ENCODE measurements at regions of chr9 and their contacts with region 1.

Region 1: DNA sequence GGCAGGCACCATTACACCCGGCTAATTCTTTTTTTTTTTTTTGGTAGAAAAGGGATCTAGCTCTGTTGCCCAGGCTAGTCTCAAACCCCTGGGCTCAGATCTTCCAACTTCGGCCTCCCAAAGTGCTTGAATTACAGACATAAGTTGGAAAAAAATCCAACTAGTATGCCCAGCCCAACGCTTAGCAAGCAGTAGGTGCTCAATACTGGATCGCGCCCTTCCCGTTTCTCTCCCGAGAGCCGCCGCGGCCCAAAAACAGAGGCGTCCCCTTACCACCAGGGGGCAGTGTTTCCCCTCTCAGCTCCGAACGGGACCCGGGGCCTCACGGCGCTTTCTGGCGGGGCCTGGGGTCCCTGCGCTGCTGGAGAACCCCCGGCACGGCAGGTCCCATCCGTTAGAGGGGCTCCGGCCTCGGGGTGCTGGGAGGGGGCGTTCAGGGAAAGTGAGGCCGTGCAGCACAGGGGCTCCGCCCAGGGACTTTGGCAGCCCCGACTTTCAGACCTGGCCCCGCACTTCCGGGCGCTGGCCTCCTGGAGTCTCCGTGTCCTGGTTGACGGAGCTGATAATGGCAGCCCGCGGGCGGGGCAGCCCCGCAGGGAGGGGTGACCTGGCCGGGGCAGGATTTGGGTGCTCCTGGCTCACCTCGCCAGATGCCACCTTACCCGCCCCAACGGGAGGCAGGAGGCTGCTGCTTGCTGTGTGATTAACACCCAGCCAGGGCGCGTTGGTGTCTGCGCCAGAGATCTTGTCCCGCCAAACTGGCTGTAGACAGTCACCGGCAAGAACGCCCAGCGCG is 15.2 kb downstream of the PTGES start:
- DNase-seq: peak; percentile 96
- H3K4me3 Mint-ChIP-seq: peak overlapping the region; percentile 71
- H3K27ac Mint-ChIP-seq: peak overlapping the region; percentile 81
- H3K4me1 Mint-ChIP-seq: peaks cover 9% of the 10 kb centered on the region
- H3K27me3 Mint-ChIP-seq: peaks cover 3% of the 10 kb centered on the region

Region 2: DNA sequence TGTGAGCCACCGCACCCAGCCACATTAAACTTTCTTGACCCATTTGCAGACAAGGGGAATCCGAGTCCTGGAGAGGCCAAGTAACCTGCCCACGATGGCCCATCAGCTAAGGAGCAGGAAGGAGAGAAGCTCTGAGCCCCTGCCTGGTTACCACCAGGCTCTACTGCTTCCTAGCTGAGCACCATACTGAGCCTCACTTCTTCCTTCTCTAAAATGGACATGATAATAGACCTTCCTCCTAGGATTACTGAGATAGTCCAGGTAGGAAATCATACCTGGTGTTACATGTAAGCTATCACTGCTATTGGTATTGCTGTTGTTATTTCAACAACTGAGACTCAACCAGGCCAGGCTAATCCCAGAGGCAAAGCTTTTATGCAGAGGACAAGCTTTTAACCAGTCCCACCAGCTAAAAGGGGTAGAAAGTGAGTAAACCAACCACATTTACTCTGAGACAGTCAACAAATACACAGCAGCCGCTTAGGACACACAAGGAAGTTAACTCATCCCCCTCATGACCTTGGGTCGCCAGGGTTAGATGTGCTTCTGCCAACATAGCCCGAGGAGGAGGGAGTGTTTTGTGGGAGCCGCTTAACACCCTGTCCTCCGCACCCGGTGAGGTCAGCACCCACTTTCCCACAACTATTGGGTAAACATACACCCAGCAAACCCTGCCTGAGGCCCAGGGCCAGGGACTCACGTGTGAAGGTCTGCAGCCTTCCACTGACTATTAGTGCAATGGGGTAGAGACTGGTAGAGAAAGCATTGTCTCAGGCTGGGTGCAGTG is 35.8 kb after region 1 on chr9:
- intact Hi-C with region 1: no loop called
- DNase-seq: no peak
- H3K4me3 Mint-ChIP-seq: no peak overlapping the region
- H3K27ac Mint-ChIP-seq: no peak overlapping the region
- H3K4me1 Mint-ChIP-seq: peaks cover 12% of the 10 kb centered on the region
- H3K27me3 Mint-ChIP-seq: peaks cover 12% of the 10 kb centered on the region

Region 3: DNA sequence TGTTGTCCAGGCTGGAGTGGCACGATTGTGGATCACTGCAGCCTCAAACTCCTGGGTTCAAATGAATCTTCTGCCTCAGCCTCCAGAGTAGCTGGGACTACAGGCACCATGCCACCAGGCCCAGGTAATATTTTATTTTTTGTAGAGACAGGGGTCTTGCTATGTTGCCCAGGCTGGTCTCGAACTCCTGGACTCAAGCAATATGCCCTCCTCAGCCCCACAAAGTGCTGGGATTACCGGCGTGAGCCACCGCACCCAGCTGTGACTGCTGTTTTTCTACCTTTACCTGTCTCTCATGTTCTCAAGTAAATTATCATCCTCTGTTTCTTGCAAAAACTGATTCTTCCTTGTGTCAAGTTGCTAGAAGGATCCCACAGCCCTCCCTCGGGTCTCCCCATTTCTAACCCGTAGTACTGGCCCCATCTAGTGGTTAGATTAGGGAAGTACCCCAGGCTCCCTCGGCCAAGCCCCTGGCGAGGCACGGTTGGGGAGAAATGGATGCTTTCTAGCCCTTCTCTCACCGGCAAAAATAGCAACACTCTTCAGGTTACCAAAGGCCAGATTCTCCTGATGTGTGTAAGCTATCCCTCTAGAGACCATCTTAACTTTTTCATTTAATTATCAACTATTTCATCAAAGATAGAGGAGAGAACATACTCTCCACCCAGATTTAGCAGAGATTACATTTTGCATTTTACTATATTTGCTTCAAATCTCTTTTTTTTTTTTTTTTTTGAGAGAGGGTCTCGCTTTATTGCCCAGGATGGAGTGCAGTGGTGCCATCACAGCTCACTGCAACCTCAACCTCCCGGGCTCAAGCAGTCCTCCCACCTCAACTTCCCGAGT is 46.1 kb after region 1 on chr9:
- intact Hi-C with region 1: loop called (anchors 1 kb)
- DNase-seq: peak; percentile 94
- H3K4me3 Mint-ChIP-seq: no peak overlapping the region
- H3K27ac Mint-ChIP-seq: no peak overlapping the region
- H3K4me1 Mint-ChIP-seq: peaks cover 4% of the 10 kb centered on the region
- H3K27me3 Mint-ChIP-seq: peaks cover 24% of the 10 kb centered on the region

Region 4: GRCh38 chr9:129796029-129796910 is 58.6 kb after region 1 on chr9:
- intact Hi-C with region 1: loop called (anchors 2 kb)
- DNase-seq: no peak
- H3K4me3 Mint-ChIP-seq: no peak overlapping the region
- H3K27ac Mint-ChIP-seq: no peak overlapping the region
- H3K4me1 Mint-ChIP-seq: no peaks in the 10 kb centered on the region
- H3K27me3 Mint-ChIP-seq: peaks cover 7% of the 10 kb centered on the region

Region 5: DNA sequence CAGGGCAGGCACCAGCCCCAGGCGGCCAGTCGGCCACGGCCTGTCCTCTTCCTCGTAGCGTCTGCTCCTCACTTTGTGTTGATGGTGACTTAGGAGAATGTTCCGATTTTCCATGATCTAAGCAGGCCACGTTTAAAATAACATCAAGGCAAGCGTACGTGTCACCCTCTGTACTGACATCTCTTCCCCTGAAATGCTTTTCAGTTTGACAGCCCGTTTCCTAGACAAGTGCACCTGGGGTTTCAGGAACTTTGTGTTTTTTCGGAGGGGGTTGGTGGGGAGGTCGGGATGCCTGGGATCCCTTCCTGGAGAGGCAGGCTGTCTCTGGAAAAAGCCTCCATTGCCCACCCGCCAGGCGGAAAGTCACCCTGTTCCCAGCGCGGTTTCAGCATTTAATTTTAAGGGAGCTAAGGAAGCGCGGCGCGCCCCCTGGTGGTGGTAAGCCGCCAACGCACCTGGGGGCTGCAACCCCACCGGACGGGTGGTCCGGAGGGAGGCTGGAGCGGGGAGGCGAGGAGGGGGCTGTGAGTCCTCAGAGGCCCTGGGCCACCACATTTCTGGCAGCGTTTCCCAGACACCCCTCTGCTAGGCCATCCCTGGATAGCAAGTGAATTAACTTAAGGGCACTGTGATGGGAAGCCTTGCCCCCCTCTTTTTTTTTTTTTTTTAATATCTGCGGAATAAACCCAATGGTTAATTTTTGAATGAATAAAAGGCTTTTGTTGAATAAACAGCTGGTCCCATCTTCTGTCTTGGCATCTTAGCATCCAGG is 498.4 kb after region 1 on chr9:
- intact Hi-C with region 1: loop called (anchors 5 kb)
- DNase-seq: peak; percentile 91
- H3K4me3 Mint-ChIP-seq: peak overlapping the region; percentile 39
- H3K27ac Mint-ChIP-seq: no peak overlapping the region
- H3K4me1 Mint-ChIP-seq: peaks cover 18% of the 10 kb centered on the region
- H3K27me3 Mint-ChIP-seq: no peaks in the 10 kb centered on the region

Measured in activated CD4-positive, alpha-beta T cell treated with anti-CD3 and anti-CD28 coated beads, Interleukin-2, amount 10 ng/mL, durations not matched to agents 24 days and 14 days (primary cell).